ENCODE measurements at regions of chr7 and their contacts with region 1.

Region 1: GRCh38 chr7:157336383-157337315 is at the start of gene DNAJB6:
- DNase-seq: peak; percentile 91
- H3K4me3 ChIP-seq: peak within 1 kb of the TSS; percentile 80 to 92 (median 84)
- H3K27ac ChIP-seq: peak within 1 kb of the TSS; percentile 89
- H3K4me1 ChIP-seq: peaks cover 14% of the 10 kb centered on the region
- H3K27me3 ChIP-seq: no peaks in the 10 kb centered on the region
- CTCF ChIP-seq: no peak
- total RNA-seq, gene DNAJB6: 151 to 157 TPM

Region 2: DNA sequence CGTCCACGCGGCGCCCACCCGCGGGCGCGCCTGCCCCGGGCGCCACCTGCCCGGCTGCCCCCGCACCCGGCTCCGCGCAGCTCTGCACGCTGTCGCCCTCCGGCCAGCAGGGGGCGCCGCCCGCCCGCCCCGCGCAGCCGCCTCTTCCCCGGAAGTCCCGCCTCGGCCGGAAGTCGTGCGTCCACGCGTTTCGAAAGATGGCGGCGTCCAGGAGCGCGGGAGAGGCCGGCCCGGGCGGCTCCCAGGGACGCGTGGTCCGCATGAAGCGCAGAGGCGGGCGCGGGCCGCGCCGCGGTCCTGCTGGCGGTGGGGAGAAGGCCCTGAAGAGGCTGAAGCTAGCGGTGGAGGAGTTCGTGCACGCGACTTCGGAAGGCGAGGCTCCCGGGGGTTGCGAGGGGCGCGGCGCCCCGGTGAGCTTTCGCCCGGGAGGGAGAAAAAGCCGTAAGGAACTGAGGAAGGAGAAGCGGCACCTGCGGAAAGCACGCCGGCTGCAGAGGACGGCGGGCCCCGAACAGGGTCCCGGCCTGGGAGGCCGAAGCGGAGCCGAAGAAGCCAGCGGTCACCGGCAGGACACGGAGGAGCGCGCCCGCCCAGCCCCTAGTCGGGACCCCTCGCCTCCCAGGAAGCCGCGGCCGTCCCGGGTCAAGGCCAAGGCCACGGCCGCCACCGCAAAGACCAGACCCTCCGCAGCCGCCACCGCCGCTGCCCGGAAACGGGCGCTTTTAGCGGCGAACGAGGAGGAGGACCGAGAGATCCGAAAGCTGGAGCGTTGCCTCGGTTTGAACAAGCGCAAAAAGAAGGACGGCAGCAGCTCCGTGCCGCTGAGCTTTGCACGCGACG is 386.9 kb before region 1 on chr7 and contains the start of gene NOM1:
- CTCF ChIA-PET with region 1: no interaction called
- dilution Hi-C with region 1: no loop called
- in situ Hi-C with region 1: no loop called
- intact Hi-C with region 1: loop called (anchors 10 kb)
- DNase-seq: peak; percentile 79
- H3K4me3 ChIP-seq: peak within 1 kb of the TSS; percentile 77 to 95 (median 88)
- H3K27ac ChIP-seq: peak within 1 kb of the TSS; percentile 69
- H3K4me1 ChIP-seq: peaks cover 21% of the 10 kb centered on the region
- H3K27me3 ChIP-seq: no peaks in the 10 kb centered on the region
- CTCF ChIP-seq: peak; percentile 64 to 66
- total RNA-seq, gene NOM1: 13.5 to 30.2 TPM

Region 3: DNA sequence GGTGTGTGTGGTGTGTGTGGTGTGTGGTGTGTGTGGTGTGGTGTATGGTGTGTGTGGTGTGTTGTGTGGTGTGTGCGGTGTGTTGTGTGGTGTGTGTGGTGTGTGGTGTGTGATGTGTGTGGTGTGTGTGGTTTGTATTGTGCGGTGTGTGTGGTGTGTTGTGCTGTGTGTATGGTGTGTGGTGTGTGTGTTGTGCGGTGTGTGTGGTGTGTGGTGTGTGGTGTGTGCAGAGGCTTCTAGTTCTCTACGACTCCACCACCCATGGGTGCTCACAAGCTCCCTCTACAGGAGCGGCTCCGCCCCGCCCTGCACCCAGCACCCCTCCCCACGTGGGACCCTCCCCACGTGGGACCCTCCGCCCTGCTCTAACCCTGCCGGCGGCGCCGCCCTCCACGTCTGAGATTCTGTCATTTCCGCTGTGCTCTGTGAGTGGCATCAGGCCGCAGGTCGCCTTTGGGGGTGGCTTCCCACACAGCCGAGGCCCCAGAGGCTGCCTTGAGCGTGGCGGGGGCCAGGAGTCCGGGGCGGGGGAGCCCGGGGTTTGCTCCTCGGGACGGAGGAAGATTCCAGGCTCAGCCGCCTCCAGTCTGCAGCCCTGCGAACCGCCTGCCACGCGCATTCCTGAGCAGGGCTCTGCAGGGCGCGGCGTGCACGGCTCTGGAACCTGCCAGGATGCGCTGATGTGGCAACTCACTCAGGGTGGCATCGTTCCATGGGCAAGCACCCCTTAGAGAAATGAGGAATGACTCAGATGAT is 36.9 kb before region 1 on chr7:
- CTCF ChIA-PET with region 1: no interaction called
- dilution Hi-C with region 1: no loop called
- in situ Hi-C with region 1: no loop called
- intact Hi-C with region 1: loop called (anchors 1 kb)
- DNase-seq: no peak
- H3K4me3 ChIP-seq: no peak overlapping the region
- H3K27ac ChIP-seq: peak overlapping the region; percentile 0
- H3K4me1 ChIP-seq: peaks cover 22% of the 10 kb centered on the region
- H3K27me3 ChIP-seq: no peaks in the 10 kb centered on the region
- CTCF ChIP-seq: peak in 1 of 2 donors; percentile 51

Region 4: GRCh38 chr7:157318012-157318709 is 18.5 kb before region 1 on chr7:
- CTCF ChIA-PET with region 1: interaction called, 3 read pairs
- dilution Hi-C with region 1: no loop called
- in situ Hi-C with region 1: no loop called
- intact Hi-C with region 1: loop called (anchors 2 kb)
- DNase-seq: peak; percentile 90
- H3K4me3 ChIP-seq: peak overlapping the region in 1 of 3 experiments; percentile 7
- H3K27ac ChIP-seq: peak overlapping the region; percentile 80
- H3K4me1 ChIP-seq: peaks cover 27% of the 10 kb centered on the region
- H3K27me3 ChIP-seq: no peaks in the 10 kb centered on the region
- CTCF ChIP-seq: no peak

Region 5: DNA sequence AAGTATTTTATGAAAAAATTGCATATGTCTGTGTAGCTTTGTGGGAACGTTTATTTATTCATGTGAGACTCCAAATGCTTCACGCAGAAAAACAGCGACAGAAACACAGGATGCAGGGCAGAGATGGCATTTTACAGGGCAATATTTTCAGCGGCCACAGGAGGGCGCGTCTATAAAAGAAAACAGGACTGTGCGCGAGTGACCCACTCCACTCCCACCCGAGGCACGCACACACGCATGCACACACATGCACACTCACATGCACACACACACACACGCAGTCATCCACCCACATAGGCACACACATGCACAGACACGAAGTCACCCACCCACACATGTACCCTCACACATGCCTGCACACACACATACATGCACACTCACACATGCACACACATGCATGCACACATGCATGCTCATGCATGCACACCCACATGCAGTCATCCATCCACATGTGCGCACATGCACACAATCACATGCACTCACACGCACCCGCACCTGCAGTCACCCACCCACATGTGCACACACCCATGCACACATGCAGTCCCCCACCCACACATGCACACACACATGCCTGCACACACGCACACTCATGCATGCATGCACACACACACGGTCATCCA is 96.4 kb after region 1 on chr7:
- CTCF ChIA-PET with region 1: no interaction called
- dilution Hi-C with region 1: no loop called
- in situ Hi-C with region 1: no loop called
- intact Hi-C with region 1: no loop called
- DNase-seq: no peak
- H3K4me3 ChIP-seq: peak overlapping the region; percentile 2 to 24 (median 6)
- H3K27ac ChIP-seq: no peak overlapping the region
- H3K4me1 ChIP-seq: no peaks in the 10 kb centered on the region
- H3K27me3 ChIP-seq: no peaks in the 10 kb centered on the region
- CTCF ChIP-seq: peak; percentile 62 to 65